ENCODE measurements at regions of chr10 and their contacts with region 1.

Region 1: DNA sequence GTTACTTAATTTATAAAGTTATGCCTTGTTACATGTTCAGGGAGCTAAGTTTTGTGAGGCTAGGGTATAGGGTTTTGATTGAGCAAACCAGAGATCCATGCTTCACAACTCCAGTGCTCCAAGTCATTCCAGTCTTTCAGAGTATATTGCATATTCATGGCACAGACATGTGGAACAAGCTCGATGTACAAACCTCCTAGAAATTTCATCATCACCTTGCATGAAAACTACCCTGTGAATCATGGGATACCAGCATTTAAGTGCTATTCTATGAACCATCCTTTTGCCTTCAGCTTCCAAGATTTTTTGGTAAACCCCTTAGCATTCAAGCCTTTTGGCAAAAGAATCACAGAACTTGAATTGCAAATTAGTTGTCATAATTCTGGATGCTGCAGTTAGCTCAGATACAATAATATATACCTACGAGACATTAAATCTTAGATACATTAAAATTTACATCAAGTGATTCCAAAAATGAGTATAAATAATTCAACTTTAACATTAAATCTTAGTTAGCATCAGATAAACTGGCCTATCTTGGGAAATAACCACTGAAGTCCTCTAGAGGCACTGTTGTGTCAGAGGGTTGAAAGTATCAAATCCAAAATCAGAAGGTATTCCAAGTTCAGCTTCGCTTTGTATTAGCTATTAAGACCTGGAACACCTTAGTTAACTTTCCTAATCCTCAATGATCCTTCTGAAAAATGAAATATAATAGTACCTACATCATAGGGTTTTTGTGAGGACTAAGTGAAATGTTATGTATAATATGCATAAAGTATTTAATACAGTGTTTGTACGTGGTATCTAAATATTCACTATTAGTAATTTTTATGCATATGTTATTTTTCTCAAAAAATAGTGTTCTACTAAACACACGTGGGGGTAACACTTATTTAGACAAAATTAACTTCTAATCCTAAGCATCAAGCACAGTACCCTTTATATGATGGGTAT is 55.5 kb upstream of the CABCOCO1 start:
- DNase-seq: no peak
- H3K4me3 ChIP-seq: no peak overlapping the region
- H3K27ac ChIP-seq: no peak overlapping the region
- H3K4me1 ChIP-seq: peaks cover 0 to 4% (median under 1%) of the 10 kb centered on the region in 4 experiments; a peak in 1 of 7 replicates
- H3K27me3 ChIP-seq: no peaks in the 10 kb centered on the region
- CTCF ChIP-seq: peak in 2 of 3 experiments; percentile 29 to 52; a peak in 2 of 4 replicates
- EP300 ChIP-seq: no peak
- POLR2A ChIP-seq: no peak
- RAD21 ChIP-seq: peak; percentile 35 to 39; a peak in 3 of 4 replicates

Region 2: GRCh38 chr10:61164458-61165160 is 442.6 kb before region 1 on chr10:
- CTCF ChIA-PET with region 1: no interaction called
- POLR2A ChIA-PET with region 1: no interaction called
- DNase-seq: no peak
- H3K4me3 ChIP-seq: no peak overlapping the region
- H3K27ac ChIP-seq: no peak overlapping the region
- H3K4me1 ChIP-seq: no peaks in the 10 kb centered on the region
- H3K27me3 ChIP-seq: no peaks in the 10 kb centered on the region
- CTCF ChIP-seq: no peak
- EP300 ChIP-seq: no peak
- POLR2A ChIP-seq: no peak
- RAD21 ChIP-seq: no peak

Region 3: DNA sequence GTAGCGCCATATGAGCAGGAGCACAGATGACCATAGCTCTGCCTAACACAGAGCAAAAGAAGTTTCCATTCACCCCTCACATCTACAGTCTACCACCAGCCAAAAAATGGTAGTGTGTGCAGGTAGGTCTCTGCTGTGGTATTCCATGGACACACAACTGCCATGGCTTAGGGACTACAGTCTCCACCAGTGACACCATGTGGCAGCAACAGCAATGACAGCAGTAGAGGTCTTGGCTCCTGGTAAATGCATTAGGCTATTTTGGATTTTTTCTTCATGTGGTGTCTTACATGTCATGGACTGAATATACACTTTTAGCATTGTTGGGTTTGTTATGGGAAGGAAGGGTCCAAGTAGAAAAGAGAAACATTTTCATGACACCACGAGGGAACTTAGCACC is 14.6 kb before region 1 on chr10:
- CTCF ChIA-PET with region 1: interaction called, 30 read pairs
- POLR2A ChIA-PET with region 1: no interaction called
- DNase-seq: peak in 1 of 2 experiments; percentile 48
- H3K4me3 ChIP-seq: no peak overlapping the region
- H3K27ac ChIP-seq: no peak overlapping the region
- H3K4me1 ChIP-seq: peaks cover 4 to 16% (median 9%) of the 10 kb centered on the region in 4 experiments; a peak in 5 of 7 replicates
- H3K27me3 ChIP-seq: no peaks in the 10 kb centered on the region
- CTCF ChIP-seq: peak; percentile 64 to 81 (median 70)
- EP300 ChIP-seq: no peak
- POLR2A ChIP-seq: no peak
- RAD21 ChIP-seq: peak; percentile 66 to 71

Region 4: GRCh38 chr10:61618388-61618961 is 11.2 kb after region 1 on chr10:
- CTCF ChIA-PET with region 1: interaction called, 24 read pairs
- POLR2A ChIA-PET with region 1: no interaction called
- DNase-seq: no peak
- H3K4me3 ChIP-seq: no peak overlapping the region
- H3K27ac ChIP-seq: no peak overlapping the region
- H3K4me1 ChIP-seq: no peaks in the 10 kb centered on the region
- H3K27me3 ChIP-seq: no peaks in the 10 kb centered on the region
- CTCF ChIP-seq: no peak
- EP300 ChIP-seq: no peak
- POLR2A ChIP-seq: no peak
- RAD21 ChIP-seq: no peak

Region 5: GRCh38 chr10:61628875-61629513 is 21.8 kb after region 1 on chr10:
- CTCF ChIA-PET with region 1: interaction called, 19 read pairs
- POLR2A ChIA-PET with region 1: no interaction called
- DNase-seq: no peak
- H3K4me3 ChIP-seq: no peak overlapping the region
- H3K27ac ChIP-seq: no peak overlapping the region
- H3K4me1 ChIP-seq: peaks cover 0 to 6% (median 0%) of the 10 kb centered on the region in 4 experiments; a peak in 3 of 7 replicates
- H3K27me3 ChIP-seq: no peaks in the 10 kb centered on the region
- CTCF ChIP-seq: no peak
- EP300 ChIP-seq: no peak
- POLR2A ChIP-seq: no peak
- RAD21 ChIP-seq: no peak

Region 6: DNA sequence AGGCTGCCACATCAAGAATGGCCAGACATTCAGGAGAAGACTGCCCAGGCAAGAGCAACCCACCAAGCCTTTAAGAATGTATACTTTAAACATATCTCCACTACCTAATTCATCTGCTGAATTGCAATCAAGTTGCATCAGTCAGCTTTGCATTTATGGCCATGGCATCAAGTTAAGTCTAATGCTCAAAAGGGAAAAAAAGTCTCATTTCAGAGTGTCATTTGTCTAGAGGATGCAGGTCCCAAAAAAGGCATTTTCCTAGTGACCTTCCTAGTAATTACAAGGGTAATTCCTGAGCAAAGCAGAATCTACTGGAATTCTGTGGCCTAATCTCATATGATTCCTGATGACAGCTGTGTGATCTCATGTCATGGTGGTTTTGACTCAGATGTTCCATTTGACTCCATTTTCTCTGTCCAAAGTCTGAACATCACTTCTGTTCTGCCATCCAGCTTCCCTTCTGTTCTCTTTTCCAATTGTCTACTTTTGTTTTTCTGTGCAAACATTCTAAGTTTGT is 48.2 kb after region 1 on chr10:
- CTCF ChIA-PET with region 1: interaction called, 10 read pairs
- POLR2A ChIA-PET with region 1: no interaction called
- DNase-seq: no peak
- H3K4me3 ChIP-seq: no peak overlapping the region
- H3K27ac ChIP-seq: no peak overlapping the region
- H3K4me1 ChIP-seq: no peaks in the 10 kb centered on the region
- H3K27me3 ChIP-seq: no peaks in the 10 kb centered on the region
- CTCF ChIP-seq: no peak
- EP300 ChIP-seq: no peak
- POLR2A ChIP-seq: no peak
- RAD21 ChIP-seq: no peak

Region 7: GRCh38 chr10:61673354-61673753 is 66.1 kb after region 1 on chr10:
- CTCF ChIA-PET with region 1: no interaction called
- POLR2A ChIA-PET with region 1: no interaction called
- DNase-seq: no peak
- H3K4me3 ChIP-seq: no peak overlapping the region
- H3K27ac ChIP-seq: no peak overlapping the region
- H3K4me1 ChIP-seq: no peaks in the 10 kb centered on the region
- H3K27me3 ChIP-seq: no peaks in the 10 kb centered on the region; a peak in 1 of 7 replicates
- CTCF ChIP-seq: no peak
- EP300 ChIP-seq: no peak
- POLR2A ChIP-seq: no peak
- RAD21 ChIP-seq: no peak